ENCODE measurements at regions of chr3 and their contacts with region 1.

Region 1: DNA sequence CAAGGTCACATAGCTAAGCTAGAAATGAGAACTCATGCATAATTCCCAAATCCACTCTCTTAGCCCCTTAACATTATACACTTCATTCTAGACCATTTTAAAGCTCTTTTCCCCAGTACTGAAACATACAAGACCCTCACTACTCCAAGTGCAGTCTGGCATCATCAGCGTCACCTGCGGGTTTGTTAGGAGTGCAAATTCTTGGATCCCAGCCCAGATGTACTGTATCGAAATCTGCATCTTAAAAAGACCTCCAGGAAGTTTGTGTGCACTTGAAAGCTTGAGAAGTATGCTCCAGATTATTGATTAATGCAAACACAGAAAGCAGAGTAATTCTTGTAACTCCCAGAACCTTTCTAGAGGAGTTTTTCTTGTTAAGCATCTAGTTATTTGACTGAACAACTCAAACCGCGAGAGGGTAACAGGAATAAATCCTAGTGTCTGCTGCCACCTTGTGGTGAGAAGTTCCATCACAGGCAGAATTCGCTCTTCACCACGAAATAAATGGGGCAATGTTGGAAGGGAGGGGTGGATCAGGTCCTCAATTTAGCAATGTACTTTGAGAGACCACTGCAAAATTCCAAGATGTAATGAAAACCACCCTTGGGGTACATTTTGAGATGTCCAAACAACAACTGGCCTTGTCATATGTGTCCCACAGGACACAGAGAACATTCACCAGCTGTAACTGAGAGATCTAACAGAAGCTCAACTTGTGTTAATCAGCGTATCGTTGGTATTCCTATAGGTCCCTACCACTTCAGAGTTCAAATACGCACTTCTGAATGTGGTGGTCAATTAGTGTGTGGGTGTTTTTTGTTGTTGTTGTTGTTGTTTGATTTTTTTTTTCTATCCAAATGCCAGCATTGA is 583 bp upstream of the C3orf49 start:
- DNase-seq: peak; percentile 56
- H3K4me3 ChIP-seq: no peak overlapping the region; a peak in 1 of 4 replicates
- H3K27ac ChIP-seq: no peak overlapping the region
- H3K4me1 ChIP-seq: peaks cover 0 to 3% of the 10 kb centered on the region in 2 experiments; a peak in 2 of 4 replicates
- H3K27me3 ChIP-seq: no peaks in the 10 kb centered on the region
- CTCF ChIP-seq: peak; percentile 95
- EP300 ChIP-seq: no peak
- RAD21 ChIP-seq: peak; percentile 92

Region 2: GRCh38 chr3:63180855-63181254 is 637.7 kb before region 1 on chr3:
- CTCF ChIA-PET with region 1: no interaction called
- POLR2A ChIA-PET with region 1: no interaction called
- DNase-seq: no peak
- H3K4me3 ChIP-seq: no peak overlapping the region
- H3K27ac ChIP-seq: no peak overlapping the region
- H3K4me1 ChIP-seq: no peaks in the 10 kb centered on the region
- H3K27me3 ChIP-seq: no peaks in the 10 kb centered on the region
- CTCF ChIP-seq: no peak
- EP300 ChIP-seq: no peak
- RAD21 ChIP-seq: no peak

Region 3: DNA sequence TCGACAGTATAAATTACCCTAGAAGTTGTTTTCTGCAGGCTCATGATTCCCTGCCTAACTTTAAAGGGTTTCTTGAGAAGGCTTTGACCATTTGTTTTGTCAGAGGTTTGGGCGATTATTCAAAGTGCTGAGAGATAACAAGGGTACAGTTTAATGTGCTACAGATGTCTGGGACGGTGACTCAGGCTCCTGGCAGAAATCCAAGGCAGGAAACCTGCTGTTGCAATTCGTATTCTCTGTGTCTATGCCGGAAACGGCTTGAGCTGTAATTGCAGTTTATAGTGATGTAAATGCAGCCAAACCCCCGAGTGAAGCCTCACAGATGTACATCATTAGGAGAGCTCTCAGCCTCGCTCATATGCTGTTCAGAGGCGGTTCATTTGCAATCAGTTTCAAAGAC is 474.8 kb before region 1 on chr3:
- CTCF ChIA-PET with region 1: interaction called, 444 read pairs
- POLR2A ChIA-PET with region 1: interaction called, 3 read pairs
- DNase-seq: peak; percentile 81
- H3K4me3 ChIP-seq: peak overlapping the region in 1 of 2 experiments; percentile 20; a peak in 1 of 4 replicates
- H3K27ac ChIP-seq: peak overlapping the region; percentile 77 to 90
- H3K4me1 ChIP-seq: peaks cover 7 to 16% of the 10 kb centered on the region in 2 experiments; a peak in 3 of 4 replicates
- H3K27me3 ChIP-seq: no peaks in the 10 kb centered on the region
- CTCF ChIP-seq: no peak
- EP300 ChIP-seq: peak; percentile 96 to 98
- RAD21 ChIP-seq: peak; percentile 11; the same call in 1 of the 2 replicates

Region 4: DNA sequence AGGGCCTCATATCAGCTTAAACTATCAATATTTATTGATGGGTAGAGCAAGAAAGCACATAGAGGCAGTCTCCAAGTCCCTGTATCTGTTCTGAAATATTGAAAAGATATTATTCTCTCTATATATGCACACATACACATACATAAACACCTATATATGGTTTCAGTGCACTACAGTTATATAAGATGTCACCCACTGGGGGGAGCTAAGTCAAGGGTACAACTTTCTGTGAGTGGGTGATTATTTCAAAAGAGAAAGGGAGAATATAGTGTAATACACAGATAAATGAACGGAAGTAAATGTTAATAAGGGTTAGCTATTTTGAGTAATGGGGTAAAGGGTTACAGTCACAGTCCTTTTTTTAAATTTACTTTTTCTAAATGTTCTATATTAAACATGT is 157.3 kb before region 1 on chr3:
- CTCF ChIA-PET with region 1: interaction called, 16 read pairs
- POLR2A ChIA-PET with region 1: no interaction called
- DNase-seq: no peak
- H3K4me3 ChIP-seq: no peak overlapping the region
- H3K27ac ChIP-seq: no peak overlapping the region
- H3K4me1 ChIP-seq: no peaks in the 10 kb centered on the region
- H3K27me3 ChIP-seq: no peaks in the 10 kb centered on the region; the same call in 1 of the 2 replicates
- CTCF ChIP-seq: peak; percentile 47
- EP300 ChIP-seq: no peak
- RAD21 ChIP-seq: peak; percentile 56

Region 5: GRCh38 chr3:63798949-63799348 is 19.6 kb before region 1 on chr3:
- CTCF ChIA-PET with region 1: interaction called, 67 read pairs
- POLR2A ChIA-PET with region 1: no interaction called
- DNase-seq: no peak
- H3K4me3 ChIP-seq: no peak overlapping the region
- H3K27ac ChIP-seq: no peak overlapping the region
- H3K4me1 ChIP-seq: peaks cover 0 to 17% of the 10 kb centered on the region in 2 experiments; a peak in 2 of 4 replicates
- H3K27me3 ChIP-seq: no peaks in the 10 kb centered on the region
- CTCF ChIP-seq: no peak
- EP300 ChIP-seq: no peak
- RAD21 ChIP-seq: no peak

Region 6: DNA sequence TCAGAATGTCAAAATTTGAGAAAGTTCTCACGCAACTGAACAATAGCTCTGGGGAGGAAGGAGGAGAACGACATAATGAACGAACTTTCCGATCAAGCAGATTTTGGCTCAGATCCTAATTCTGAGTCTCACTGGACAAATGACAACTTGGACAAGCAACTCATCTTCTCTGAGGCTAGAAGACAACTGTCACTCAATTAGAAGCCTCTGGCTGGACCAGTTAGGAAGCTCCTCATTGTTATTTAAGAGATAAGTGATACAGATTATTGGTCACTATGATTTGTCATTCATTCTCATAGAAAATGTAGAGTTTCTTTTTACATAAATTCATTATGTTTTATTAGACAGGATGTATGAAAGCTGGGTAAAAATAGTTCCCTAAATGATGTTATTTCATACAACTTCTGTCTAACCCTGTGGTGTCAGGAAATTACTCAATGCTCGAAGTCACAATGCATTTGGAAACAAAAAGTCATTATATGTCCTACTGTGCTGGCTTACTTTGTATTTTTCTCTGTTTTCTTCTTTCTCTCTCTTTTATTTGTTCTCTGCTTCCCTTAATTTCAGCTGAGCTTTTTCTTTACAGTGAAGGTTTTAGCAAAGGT is 10.5 kb before region 1 on chr3:
- CTCF ChIA-PET with region 1: interaction called, 67 read pairs
- POLR2A ChIA-PET with region 1: no interaction called
- DNase-seq: no peak
- H3K4me3 ChIP-seq: no peak overlapping the region
- H3K27ac ChIP-seq: no peak overlapping the region
- H3K4me1 ChIP-seq: peaks cover 0 to 8% of the 10 kb centered on the region in 2 experiments; a peak in 1 of 4 replicates
- H3K27me3 ChIP-seq: no peaks in the 10 kb centered on the region
- CTCF ChIP-seq: no peak
- EP300 ChIP-seq: no peak
- RAD21 ChIP-seq: no peak

Region 7: DNA sequence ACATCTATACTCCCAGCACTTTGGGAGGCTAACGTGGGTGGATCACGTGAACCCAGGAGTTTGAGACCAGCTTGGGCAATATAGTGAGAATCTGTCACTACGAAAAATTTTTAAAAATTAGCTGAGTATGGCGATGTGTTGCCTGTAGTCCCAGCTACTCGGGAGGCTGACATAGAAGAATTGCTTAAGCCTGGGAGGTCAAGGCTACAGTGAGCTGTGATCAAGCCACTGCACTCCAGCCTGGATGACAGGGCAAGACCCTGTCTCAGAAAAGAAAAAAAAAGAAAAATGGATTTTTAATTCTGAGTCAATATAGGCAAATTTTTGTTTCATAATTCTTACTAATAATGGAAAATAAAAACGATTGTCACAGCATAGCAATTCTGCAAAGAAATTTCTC is 13.9 kb after region 1 on chr3:
- CTCF ChIA-PET with region 1: interaction called, 38 read pairs
- POLR2A ChIA-PET with region 1: no interaction called
- DNase-seq: no peak
- H3K4me3 ChIP-seq: no peak overlapping the region
- H3K27ac ChIP-seq: no peak overlapping the region
- H3K4me1 ChIP-seq: no peaks in the 10 kb centered on the region
- H3K27me3 ChIP-seq: no peaks in the 10 kb centered on the region
- CTCF ChIP-seq: no peak
- EP300 ChIP-seq: no peak
- RAD21 ChIP-seq: no peak

Measured in SK-N-SH (cell line).